ENCODE measurements at regions of chr22 and their contacts with region 1.

Region 1: DNA sequence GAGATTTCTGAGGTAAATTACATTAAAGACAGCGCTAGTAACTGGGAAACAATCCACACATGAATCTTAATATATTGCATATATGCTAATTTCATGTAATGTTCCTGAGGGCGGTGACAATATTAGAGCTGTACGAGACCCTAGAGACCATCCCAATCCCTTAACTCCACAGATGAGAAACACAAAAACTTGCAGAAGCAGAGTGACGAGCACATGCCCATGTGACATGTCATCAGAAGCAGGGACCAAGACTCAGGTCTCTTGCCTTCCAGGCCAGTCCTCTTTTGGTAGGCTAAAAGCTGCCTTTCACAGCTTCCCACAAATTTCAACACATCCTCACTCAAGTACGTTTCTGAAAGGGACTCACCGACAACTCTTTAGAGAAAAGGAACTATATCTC is 11.8 kb downstream of the MAPK1 start:
- DNase-seq: no peak
- H3K4me3 ChIP-seq: no peak overlapping the region
- H3K27ac ChIP-seq: no peak overlapping the region
- H3K4me1 ChIP-seq: peaks cover 7% of the 10 kb centered on the region
- H3K27me3 ChIP-seq: no peaks in the 10 kb centered on the region
- CTCF ChIP-seq: no peak

Region 2: DNA sequence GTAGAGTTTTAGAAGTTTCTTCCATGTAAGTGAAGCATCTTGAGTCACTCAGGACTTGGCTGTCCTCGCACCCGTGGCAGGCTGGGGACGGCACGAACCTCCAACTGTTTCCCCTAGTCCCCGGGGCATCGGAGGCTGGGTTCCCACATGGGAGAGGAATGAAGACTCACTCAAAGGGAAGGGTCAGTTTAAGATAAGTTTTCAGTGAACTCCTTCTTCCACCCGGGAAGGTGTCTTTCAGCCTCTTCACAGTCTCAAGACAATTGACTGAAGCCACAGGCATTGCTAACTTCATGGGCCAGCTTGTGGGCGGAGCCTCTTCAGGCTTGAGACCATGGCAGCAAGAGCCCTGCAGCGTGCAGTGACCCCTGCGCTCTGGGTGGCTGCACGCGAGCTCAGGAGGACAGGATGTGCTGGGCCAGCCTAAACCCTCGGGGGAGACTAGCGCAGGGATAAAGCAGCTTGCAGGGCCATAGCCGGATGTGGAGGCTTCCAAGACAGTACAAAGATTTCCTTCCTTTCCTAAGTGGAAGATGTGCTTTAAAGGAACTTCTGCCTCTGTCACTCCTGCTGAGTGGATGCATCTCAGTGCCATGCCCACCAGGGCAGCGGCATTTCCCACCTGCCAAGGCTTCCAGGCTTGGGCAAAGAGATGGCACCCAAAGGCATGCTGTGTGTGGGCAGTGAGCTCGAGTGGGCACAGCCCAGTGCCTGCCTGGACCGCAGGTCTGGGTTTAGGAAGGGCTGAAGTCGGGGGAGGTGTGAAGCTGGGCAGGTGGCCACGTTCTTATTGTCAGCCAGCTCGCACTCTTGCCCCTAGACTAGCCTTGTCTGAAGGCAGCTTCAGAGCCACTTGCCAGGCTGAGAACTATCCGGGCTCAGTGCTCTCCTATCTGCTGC is 157.0 kb before region 1 on chr22:
- CTCF ChIA-PET with region 1: no interaction called
- POLR2A ChIA-PET with region 1: no interaction called
- intact Hi-C with region 1: no loop called
- DNase-seq: no peak
- H3K4me3 ChIP-seq: no peak overlapping the region
- H3K27ac ChIP-seq: no peak overlapping the region
- H3K4me1 ChIP-seq: no peaks in the 10 kb centered on the region
- H3K27me3 ChIP-seq: no peaks in the 10 kb centered on the region
- CTCF ChIP-seq: no peak

Region 3: DNA sequence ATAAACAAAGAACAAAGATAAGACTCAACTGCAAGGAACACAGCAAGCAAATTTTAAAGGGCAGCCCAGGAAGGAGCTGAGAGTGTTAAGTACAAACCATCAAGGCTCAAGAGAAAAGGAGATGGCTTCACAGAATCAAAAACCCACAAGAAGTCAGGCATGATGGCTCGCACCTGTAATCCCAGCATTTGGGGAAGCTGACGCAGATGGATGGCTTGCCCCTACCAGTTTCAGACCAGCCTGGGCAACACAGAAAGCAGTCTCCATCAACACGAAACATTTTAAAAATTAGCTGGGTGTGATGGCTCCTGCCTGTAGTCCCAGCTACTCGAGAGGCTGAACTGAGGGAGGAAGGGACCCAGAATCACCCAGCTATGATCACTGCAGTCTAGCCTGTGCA is 20.8 kb before region 1 on chr22:
- CTCF ChIA-PET with region 1: no interaction called
- POLR2A ChIA-PET with region 1: no interaction called
- intact Hi-C with region 1: loop called (anchors 2 kb)
- DNase-seq: no peak
- H3K4me3 ChIP-seq: no peak overlapping the region
- H3K27ac ChIP-seq: no peak overlapping the region
- H3K4me1 ChIP-seq: peaks cover 20% of the 10 kb centered on the region
- H3K27me3 ChIP-seq: no peaks in the 10 kb centered on the region
- CTCF ChIP-seq: no peak

Region 4: GRCh38 chr22:21972293-21972779 is 116.7 kb after region 1 on chr22:
- CTCF ChIA-PET with region 1: no interaction called
- POLR2A ChIA-PET with region 1: no interaction called
- intact Hi-C with region 1: no loop called
- DNase-seq: peak; percentile 50
- H3K4me3 ChIP-seq: no peak overlapping the region
- H3K27ac ChIP-seq: no peak overlapping the region
- H3K4me1 ChIP-seq: no peaks in the 10 kb centered on the region
- H3K27me3 ChIP-seq: no peaks in the 10 kb centered on the region
- CTCF ChIP-seq: peak; percentile 92